ENCODE measurements at regions of chr12 and their contacts with region 1.

Region 1: DNA sequence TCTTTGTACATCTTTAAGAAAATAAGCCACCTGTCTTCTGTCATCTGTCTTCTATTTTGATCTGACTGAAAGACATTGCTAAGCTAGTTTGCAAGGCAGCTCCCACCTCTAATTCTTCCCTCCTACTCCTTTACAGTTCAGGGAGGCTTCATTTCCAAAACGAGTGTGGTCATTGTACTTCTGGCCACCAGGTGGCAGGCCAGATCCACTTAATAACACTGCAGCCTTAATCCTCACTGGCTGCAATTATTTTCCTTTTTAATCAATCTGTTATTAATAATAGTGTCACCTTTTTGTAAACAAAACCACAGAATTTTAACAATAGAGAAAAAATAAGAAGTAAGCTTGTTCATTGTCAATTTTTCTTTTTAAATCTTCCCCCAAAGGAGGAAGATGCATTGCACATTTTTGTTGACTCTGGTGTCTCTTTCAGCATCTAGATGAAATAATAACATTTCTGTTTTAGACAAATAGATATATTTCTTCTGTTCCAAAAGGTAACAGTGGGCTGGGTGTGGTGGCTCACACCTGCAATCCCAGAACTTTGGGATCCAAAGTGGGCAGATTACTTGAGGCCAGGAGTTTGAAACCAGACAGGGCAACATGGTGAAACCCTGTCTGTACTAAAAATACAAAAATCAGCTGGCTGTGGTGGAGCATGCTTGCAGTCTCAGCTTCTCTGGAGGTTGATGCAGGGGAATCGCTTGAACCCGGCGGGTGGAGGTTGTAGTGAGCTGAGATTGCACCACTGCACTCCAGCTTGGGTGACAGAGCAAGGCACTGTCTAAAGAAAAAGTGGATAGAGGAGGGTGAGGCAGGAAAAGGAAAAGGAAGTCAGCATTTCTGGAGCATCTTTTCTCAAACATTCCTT is 23.3 kb downstream of the GABARAPL1 start:
- DNase-seq: peak; percentile 53
- ATAC-seq: peak; percentile 58
- H3K4me3 Mint-ChIP-seq: no peak overlapping the region
- H3K27ac Mint-ChIP-seq: peak overlapping the region; percentile 40
- H3K4me1 Mint-ChIP-seq: peaks cover 32% of the 10 kb centered on the region
- H3K27me3 Mint-ChIP-seq: no peaks in the 10 kb centered on the region

Region 2: GRCh38 chr12:10167588-10167987 is 68.4 kb before region 1 on chr12:
- CTCF ChIA-PET with region 1: no interaction called
- POLR2A ChIA-PET with region 1: no interaction called
- DNase-seq: no peak
- ATAC-seq: no peak
- H3K4me3 Mint-ChIP-seq: no peak overlapping the region
- H3K27ac Mint-ChIP-seq: no peak overlapping the region
- H3K4me1 Mint-ChIP-seq: no peaks in the 10 kb centered on the region
- H3K27me3 Mint-ChIP-seq: peaks cover 29% of the 10 kb centered on the region

Region 3: DNA sequence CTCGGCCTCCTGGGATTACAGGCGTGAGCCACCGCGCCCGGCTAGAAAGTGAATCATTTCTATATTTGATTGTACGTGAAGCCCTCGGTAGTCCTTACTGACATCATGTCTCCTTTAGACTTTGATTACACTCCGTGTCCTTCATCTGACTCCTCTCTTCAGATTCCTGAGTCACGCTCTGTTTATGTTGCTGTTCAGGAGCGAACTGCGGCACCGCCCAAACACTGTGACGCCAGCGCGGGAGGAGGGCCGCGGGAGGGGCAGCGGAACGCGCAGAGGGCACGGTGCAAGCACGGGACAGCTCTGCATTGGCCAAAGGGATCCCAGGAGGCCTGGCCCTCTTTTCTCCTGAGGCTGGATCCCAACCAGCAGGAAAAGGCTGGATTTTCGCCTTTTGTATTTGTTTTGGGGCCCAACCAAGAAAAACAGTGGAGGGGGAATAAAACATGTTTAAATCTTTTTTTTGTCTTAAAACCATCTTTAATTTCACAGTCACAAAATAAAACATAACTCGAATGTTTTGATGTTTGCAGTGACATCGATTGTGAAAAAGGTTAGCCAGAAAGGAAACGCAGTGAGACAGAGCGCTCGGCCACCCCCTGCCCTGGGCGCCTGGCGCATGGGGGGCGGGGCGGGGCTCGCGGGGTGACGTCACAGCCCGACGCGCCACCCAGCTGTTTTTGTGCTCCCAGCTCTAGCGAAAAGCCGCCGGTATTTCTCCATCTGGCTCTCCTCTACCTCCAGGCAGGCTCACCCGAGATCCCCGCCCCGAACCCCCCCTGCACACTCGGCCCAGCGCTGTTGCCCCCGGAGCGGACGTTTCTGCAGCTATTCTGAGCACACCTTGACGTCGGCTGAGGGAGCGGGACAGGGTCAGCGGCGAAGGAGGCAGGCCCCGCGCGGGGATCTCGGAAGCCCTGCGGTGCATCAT is 23.5 kb before region 1 on chr12 and contains the start of gene GABARAPL1:
- CTCF ChIA-PET with region 1: interaction called, 12 read pairs
- POLR2A ChIA-PET with region 1: no interaction called
- DNase-seq: peak; percentile 84
- ATAC-seq: peak; percentile 73
- H3K4me3 Mint-ChIP-seq: peak within 1 kb of the TSS; percentile 92
- H3K27ac Mint-ChIP-seq: peak within 1 kb of the TSS; percentile 94
- H3K4me1 Mint-ChIP-seq: peaks cover 32% of the 10 kb centered on the region
- H3K27me3 Mint-ChIP-seq: peaks cover 4% of the 10 kb centered on the region
- total RNA-seq, gene GABARAPL1: 15.1 to 17.0 TPM

Region 4: GRCh38 chr12:10223208-10223607 is 12.8 kb before region 1 on chr12:
- CTCF ChIA-PET with region 1: interaction called, 12 read pairs
- POLR2A ChIA-PET with region 1: no interaction called
- DNase-seq: no peak
- ATAC-seq: no peak
- H3K4me3 Mint-ChIP-seq: no peak overlapping the region
- H3K27ac Mint-ChIP-seq: no peak overlapping the region
- H3K4me1 Mint-ChIP-seq: peaks cover 14% of the 10 kb centered on the region
- H3K27me3 Mint-ChIP-seq: no peaks in the 10 kb centered on the region

Region 5: GRCh38 chr12:10293570-10294227 is 57.7 kb after region 1 on chr12:
- CTCF ChIA-PET with region 1: interaction called, 10 read pairs
- POLR2A ChIA-PET with region 1: no interaction called
- DNase-seq: peak; percentile 59
- ATAC-seq: peak; percentile 80
- H3K4me3 Mint-ChIP-seq: peak overlapping the region; percentile 17
- H3K27ac Mint-ChIP-seq: peak overlapping the region; percentile 76
- H3K4me1 Mint-ChIP-seq: peaks cover 51% of the 10 kb centered on the region
- H3K27me3 Mint-ChIP-seq: no peaks in the 10 kb centered on the region

Region 6: DNA sequence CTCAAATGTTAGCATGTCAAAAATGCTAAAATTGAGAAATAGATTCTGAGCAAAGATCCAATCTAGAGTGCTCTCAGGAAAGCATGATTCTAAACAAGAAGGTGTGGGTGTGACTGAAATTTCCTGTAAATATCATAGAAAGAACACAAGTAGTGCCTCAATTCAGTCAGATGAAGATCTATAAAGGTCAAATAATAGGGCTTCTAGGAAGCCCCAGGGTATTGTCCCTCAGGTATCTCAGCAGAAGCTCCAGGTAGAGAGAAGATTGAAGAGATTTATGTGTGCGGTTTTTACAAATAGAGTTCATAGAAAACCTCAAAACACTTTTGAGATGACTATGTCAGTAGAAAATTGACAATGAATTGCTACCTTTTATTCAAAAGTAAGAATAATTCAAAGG is 84.6 kb after region 1 on chr12:
- CTCF ChIA-PET with region 1: interaction called, 17 read pairs
- POLR2A ChIA-PET with region 1: no interaction called
- DNase-seq: no peak
- ATAC-seq: peak; percentile 76
- H3K4me3 Mint-ChIP-seq: no peak overlapping the region
- H3K27ac Mint-ChIP-seq: no peak overlapping the region
- H3K4me1 Mint-ChIP-seq: peaks cover 28% of the 10 kb centered on the region
- H3K27me3 Mint-ChIP-seq: no peaks in the 10 kb centered on the region

Region 7: GRCh38 chr12:10466311-10466710 is 230.3 kb after region 1 on chr12:
- CTCF ChIA-PET with region 1: no interaction called
- POLR2A ChIA-PET with region 1: no interaction called
- DNase-seq: no peak
- ATAC-seq: no peak
- H3K4me3 Mint-ChIP-seq: no peak overlapping the region
- H3K27ac Mint-ChIP-seq: no peak overlapping the region
- H3K4me1 Mint-ChIP-seq: peaks cover 4% of the 10 kb centered on the region
- H3K27me3 Mint-ChIP-seq: no peaks in the 10 kb centered on the region